ENCODE measurements at regions of chr1 and their contacts with region 1.

Region 1: DNA sequence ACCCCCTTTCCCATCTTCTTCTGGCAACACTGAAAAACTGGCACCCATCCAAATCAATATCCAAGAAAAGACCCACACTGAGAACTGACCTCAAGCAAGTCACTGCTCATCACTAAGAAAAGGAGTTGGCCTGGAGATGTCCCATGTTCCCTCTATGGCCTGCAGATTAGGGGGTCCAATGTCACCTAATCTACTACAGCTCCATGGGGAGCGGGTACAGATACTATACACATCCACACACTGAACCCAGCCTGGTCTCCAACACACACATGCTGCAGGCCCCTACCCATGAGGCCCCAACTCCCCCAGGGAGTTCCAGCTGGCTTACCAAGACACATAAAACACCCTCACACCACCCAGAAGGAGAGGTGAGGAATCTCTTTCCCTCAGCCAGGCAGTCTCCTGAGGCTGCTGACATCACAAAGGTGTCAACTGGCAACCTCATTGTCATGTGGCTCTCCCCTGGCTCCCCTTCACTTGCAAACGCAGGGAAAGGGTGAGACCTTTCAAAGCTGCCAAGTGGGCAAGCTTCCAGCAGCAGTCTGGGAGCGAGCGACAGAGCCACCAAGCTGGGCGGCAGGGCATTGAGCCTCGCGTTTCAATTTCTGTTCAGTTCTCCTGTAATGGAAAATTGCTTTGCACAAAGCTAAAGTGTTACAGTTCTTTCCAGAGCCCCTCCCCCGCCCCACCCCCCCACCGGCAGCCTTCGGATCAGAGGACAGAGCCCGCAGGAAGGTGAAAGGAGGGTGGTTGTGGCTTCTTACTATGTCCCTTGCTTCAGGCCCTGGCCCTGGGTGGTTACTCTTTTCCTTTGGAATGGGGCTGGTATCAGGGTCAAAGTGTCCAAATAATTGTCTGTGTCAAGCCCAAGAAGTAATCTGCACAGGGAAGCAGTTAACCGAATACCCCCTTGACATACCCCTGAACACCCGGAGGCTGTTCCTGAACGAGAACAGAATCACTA is at the start of gene LRRC52:
- DNase-seq: peak; percentile 79 to 93 (median 87)
- ATAC-seq: peak; percentile 87 to 92 (median 90)
- H3K4me3 ChIP-seq: peak within 1 kb of the TSS in 1 of 12 donors; percentile 6
- H3K27ac ChIP-seq: peak within 1 kb of the TSS in 10 of 12 donors; percentile 13 to 80 (median 68)
- H3K4me1 ChIP-seq: peaks cover 0 to 49% (median 22%) of the 10 kb centered on the region in 12 donors
- H3K27me3 ChIP-seq: peaks cover 0 to 5% (median 0%) of the 10 kb centered on the region in 9 donors
- CTCF ChIP-seq: peak in 4 of 12 donors; percentile 35 to 60 (median 43)
- POLR2A ChIP-seq: no peak
- total RNA-seq, gene LRRC52: 0.17 to 1.0 (median 0.44) TPM in 5 of 9 donors, not detected in the others

Region 2: GRCh38 chr1:165403835-165404482 is 139.9 kb before region 1 on chr1:
- intact Hi-C with region 1: loop called in 2 of 10 experiments (anchors 5 kb)
- DNase-seq: peak in 1 of 5 donors; percentile 29
- ATAC-seq: peak in 3 of 4 donors; percentile 52 to 62 (median 61)
- H3K4me3 ChIP-seq: no peak overlapping the region
- H3K27ac ChIP-seq: no peak overlapping the region
- H3K4me1 ChIP-seq: peaks cover 0 to 4% (median 0%) of the 10 kb centered on the region in 12 donors
- H3K27me3 ChIP-seq: peaks cover 0 to 14% (median 0%) of the 10 kb centered on the region in 9 donors
- CTCF ChIP-seq: peak; percentile 40 to 72 (median 65)
- POLR2A ChIP-seq: no peak

Region 3: GRCh38 chr1:165409657-165410358 is 134.0 kb before region 1 on chr1:
- intact Hi-C with region 1: loop called in 5 of 10 experiments (anchors 5 to 10 kb)
- DNase-seq: peak in 4 of 5 donors; percentile 45 to 59 (median 55)
- ATAC-seq: peak; percentile 93 to 95 (median 94)
- H3K4me3 ChIP-seq: no peak overlapping the region
- H3K27ac ChIP-seq: peak overlapping the region in 1 of 12 donors; percentile 47
- H3K4me1 ChIP-seq: peaks cover 0 to 29% (median 6%) of the 10 kb centered on the region in 12 donors
- H3K27me3 ChIP-seq: no peaks in the 10 kb centered on the region
- CTCF ChIP-seq: no peak
- POLR2A ChIP-seq: no peak

Region 4: GRCh38 chr1:165452336-165453130 is 91.3 kb before region 1 on chr1:
- intact Hi-C with region 1: loop called in 1 of 10 experiments (anchors 5 kb)
- DNase-seq: peak in 4 of 5 donors; percentile 51 to 70 (median 56)
- ATAC-seq: peak; percentile 85 to 95 (median 92)
- H3K4me3 ChIP-seq: no peak overlapping the region
- H3K27ac ChIP-seq: peak overlapping the region in 8 of 12 donors; percentile 26 to 80 (median 45)
- H3K4me1 ChIP-seq: peaks cover 0 to 15% (median 3%) of the 10 kb centered on the region in 12 donors
- H3K27me3 ChIP-seq: no peaks in the 10 kb centered on the region
- CTCF ChIP-seq: peak in 3 of 12 donors; percentile 32 to 43 (median 35)
- POLR2A ChIP-seq: no peak

Region 5: GRCh38 chr1:165490175-165490574 is 53.6 kb before region 1 on chr1:
- intact Hi-C with region 1: loop called in 1 of 10 experiments (anchors 5 kb)
- DNase-seq: peak in 4 of 5 donors; percentile 73 to 92 (median 82)
- ATAC-seq: peak; percentile 82 to 95 (median 92)
- H3K4me3 ChIP-seq: no peak overlapping the region
- H3K27ac ChIP-seq: peak overlapping the region in 7 of 12 donors; percentile 17 to 64 (median 51)
- H3K4me1 ChIP-seq: peaks cover 0 to 48% (median 19%) of the 10 kb centered on the region in 12 donors
- H3K27me3 ChIP-seq: no peaks in the 10 kb centered on the region
- CTCF ChIP-seq: no peak
- POLR2A ChIP-seq: no peak

Measured in heart left ventricle (tissue), 16 donors.